ENCODE measurements at regions of chr16 and their contacts with region 1.

Region 1: GRCh38 chr16:10964039-10964890 is 19.9 kb downstream of the CLEC16A start:
- DNase-seq: peak; percentile 92
- H3K4me3 Mint-ChIP-seq: peak overlapping the region; percentile 43
- H3K27ac Mint-ChIP-seq: peak overlapping the region; percentile 92
- H3K4me1 Mint-ChIP-seq: peaks cover 39% of the 10 kb centered on the region
- H3K27me3 Mint-ChIP-seq: no peaks in the 10 kb centered on the region

Region 2: DNA sequence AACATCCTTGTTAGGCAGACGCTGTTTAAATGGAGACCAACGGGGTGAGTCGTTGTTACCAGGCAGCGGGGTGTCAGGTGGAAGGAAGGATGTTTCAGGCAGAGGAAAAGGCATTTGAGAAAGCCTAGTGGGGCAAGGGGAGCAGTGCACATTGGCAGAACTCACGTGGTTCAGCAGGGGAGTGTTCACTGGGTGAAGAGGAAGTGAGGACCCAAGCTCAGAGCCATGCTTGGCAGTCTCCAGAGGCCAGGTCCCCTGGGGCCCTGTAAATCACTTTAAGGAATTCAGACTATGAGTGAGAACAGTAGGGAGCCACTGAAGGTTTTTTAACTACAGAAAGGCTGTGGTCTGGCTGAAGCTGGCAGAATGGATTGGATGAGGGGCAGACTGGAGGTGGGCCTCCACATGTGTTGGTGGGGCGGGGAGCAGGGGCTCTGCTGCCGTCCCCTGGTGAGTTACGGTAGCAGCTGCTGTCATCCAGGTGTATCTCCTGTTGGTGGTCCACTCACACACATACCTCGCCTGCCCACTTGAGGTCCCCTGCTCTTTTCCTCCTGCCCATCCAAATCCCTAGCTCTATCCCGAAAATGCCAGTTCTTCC is 14.8 kb before region 1 on chr16:
- CTCF ChIA-PET with region 1: interaction called, 38 read pairs
- intact Hi-C with region 1: loop called (anchors 1 kb)
- DNase-seq: peak; percentile 75
- H3K4me3 Mint-ChIP-seq: no peak overlapping the region
- H3K27ac Mint-ChIP-seq: no peak overlapping the region
- H3K4me1 Mint-ChIP-seq: peaks cover 53% of the 10 kb centered on the region
- H3K27me3 Mint-ChIP-seq: no peaks in the 10 kb centered on the region

Region 3: DNA sequence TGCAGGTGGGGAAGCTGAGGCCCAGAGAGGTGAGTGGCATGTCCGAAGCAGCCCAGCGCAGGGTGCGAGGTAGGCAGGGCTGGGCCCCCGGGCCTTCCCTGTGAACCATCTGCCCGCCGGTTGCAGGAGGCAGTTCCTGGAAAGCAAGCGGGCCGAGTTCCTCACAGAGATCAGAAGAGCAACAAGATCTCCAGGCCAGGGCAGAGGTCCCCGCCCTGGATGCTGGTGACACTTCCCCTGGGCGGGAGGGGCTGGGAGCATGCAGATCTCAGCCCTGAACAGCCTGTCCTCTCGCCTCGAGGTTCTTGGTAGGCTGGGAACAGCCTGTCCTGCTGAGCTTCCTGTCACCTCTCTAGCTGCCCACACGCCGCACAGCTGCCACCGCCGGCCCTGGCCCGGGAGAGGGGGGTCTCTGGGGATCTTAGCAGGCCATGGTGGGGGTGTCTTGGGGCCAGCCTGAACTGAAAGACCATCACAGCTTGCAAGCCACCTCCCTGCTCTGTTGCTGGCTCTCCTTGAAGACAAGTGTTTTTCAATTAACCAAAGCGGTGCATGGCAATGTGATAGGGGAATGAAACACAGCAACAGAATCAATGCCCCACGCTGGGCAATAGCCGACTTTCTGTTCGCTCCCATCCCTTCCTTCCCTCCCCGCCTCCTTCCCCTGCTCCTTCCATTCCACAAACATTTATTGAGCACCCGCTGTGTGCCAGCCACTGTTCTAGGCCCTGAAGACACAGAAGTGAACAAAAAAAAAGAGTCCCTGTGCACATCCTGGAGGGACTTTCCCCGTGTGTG is 260.0 kb after region 1 on chr16:
- CTCF ChIA-PET with region 1: interaction called, 11 read pairs
- intact Hi-C with region 1: loop called (anchors 1 kb)
- DNase-seq: peak; percentile 86
- H3K4me3 Mint-ChIP-seq: peak overlapping the region; percentile 35
- H3K27ac Mint-ChIP-seq: peak overlapping the region; percentile 96
- H3K4me1 Mint-ChIP-seq: peaks cover 51% of the 10 kb centered on the region
- H3K27me3 Mint-ChIP-seq: no peaks in the 10 kb centered on the region

Region 4: GRCh38 chr16:11370084-11370931 is 406.0 kb after region 1 on chr16:
- CTCF ChIA-PET with region 1: interaction called, 12 read pairs
- intact Hi-C with region 1: no loop called
- DNase-seq: peak; percentile 42
- H3K4me3 Mint-ChIP-seq: no peak overlapping the region
- H3K27ac Mint-ChIP-seq: no peak overlapping the region
- H3K4me1 Mint-ChIP-seq: peaks cover 11% of the 10 kb centered on the region
- H3K27me3 Mint-ChIP-seq: no peaks in the 10 kb centered on the region

Region 5: GRCh38 chr16:11639925-11640899 is 675.9 kb after region 1 on chr16:
- CTCF ChIA-PET with region 1: interaction called, 3 read pairs
- intact Hi-C with region 1: loop called (anchors 2 kb)
- DNase-seq: no peak
- H3K4me3 Mint-ChIP-seq: no peak overlapping the region
- H3K27ac Mint-ChIP-seq: no peak overlapping the region
- H3K4me1 Mint-ChIP-seq: peaks cover 11% of the 10 kb centered on the region
- H3K27me3 Mint-ChIP-seq: no peaks in the 10 kb centered on the region

Region 6: GRCh38 chr16:11806721-11807120 is 842.5 kb after region 1 on chr16:
- CTCF ChIA-PET with region 1: no interaction called
- intact Hi-C with region 1: loop called (anchors 5 kb)
- DNase-seq: no peak
- H3K4me3 Mint-ChIP-seq: no peak overlapping the region
- H3K27ac Mint-ChIP-seq: no peak overlapping the region
- H3K4me1 Mint-ChIP-seq: peaks cover 10% of the 10 kb centered on the region
- H3K27me3 Mint-ChIP-seq: no peaks in the 10 kb centered on the region